IMR-90 (cell line): ENCODE measurements at regions of chr5 and their contacts with region 1.

Region 1: GRCh38 chr5:135560858-135561257 is 17.9 kb downstream of the CXCL14 start:
- DNase-seq: peak; percentile 70
- ATAC-seq: peak; percentile 99
- H3K4me3 ChIP-seq: no peak overlapping the region
- H3K27ac ChIP-seq: no peak overlapping the region
- H3K4me1 ChIP-seq: no peaks in the 10 kb centered on the region
- H3K27me3 ChIP-seq: peaks cover 26% of the 10 kb centered on the region
- CTCF ChIP-seq: peak; percentile 80
- POLR2A ChIP-seq: no peak
- RAD21 ChIP-seq: peak; percentile 72

Region 2: DNA sequence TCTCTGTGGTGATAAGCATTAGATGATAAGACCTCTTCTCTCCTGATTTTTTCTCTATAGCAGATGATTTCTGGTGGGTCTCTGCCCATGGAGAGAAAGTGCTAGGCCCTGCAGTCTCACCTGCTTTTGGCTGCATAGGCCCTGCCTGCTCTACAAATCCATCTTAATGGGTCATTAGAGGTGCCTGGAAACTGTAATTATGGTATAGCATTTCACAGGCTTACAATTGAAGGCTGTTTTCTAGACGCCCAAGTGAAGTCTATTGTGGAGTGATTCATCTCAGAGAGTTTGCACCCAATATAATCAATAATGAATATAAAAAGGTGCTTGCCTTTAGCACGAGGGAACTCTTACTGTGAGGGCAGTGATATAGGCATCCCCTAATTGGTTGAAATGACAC is 58.9 kb before region 1 on chr5:
- CTCF ChIA-PET with region 1: no interaction called
- POLR2A ChIA-PET with region 1: no interaction called
- dilution Hi-C with region 1: no loop called
- in situ Hi-C with region 1: no loop called
- intact Hi-C with region 1: no loop called
- DNase-seq: no peak
- ATAC-seq: no peak
- H3K4me3 ChIP-seq: no peak overlapping the region
- H3K27ac ChIP-seq: no peak overlapping the region
- H3K4me1 ChIP-seq: no peaks in the 10 kb centered on the region
- H3K27me3 ChIP-seq: peaks cover 54% of the 10 kb centered on the region
- CTCF ChIP-seq: no peak
- POLR2A ChIP-seq: no peak
- RAD21 ChIP-seq: no peak

Region 3: DNA sequence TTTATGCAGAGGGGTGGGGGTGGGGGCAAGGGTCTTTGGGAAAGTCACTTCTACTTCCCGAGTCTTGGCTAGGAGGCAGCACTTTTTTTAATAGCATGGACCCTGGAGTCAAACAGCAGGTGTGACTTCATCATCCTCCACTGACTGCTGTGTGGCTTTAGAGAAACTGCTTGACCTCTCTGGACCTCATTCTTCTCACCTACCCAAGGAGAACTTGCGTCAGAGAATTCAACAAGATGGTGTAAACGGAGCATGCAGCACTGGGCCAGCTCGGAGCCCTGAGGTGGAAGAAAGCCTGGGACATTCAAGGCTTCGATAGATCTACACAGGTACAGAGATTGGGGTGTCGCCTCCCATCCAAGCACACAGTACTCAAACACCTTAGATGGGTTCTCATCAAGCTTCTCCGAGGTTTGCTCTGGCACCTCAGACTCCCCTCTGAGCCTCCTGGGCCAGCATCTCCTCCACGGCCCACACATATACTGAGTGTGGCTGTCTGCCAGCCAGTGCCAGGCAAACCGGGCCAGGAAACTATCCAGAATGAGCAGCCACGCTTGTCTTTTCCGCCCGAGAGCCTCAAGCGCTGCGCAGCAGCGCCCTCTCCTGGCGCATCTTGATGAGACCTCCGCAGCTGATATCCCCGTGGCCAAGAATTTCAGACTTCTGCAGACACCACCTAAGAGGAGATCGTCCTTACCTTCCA is 269.0 kb after region 1 on chr5:
- CTCF ChIA-PET with region 1: interaction called, 11 read pairs
- POLR2A ChIA-PET with region 1: no interaction called
- dilution Hi-C with region 1: no loop called
- in situ Hi-C with region 1: loop called (anchors 10 kb)
- intact Hi-C with region 1: loop called (anchors 1 kb)
- DNase-seq: peak; percentile 31
- ATAC-seq: peak; percentile 73
- H3K4me3 ChIP-seq: no peak overlapping the region
- H3K27ac ChIP-seq: no peak overlapping the region
- H3K4me1 ChIP-seq: no peaks in the 10 kb centered on the region
- H3K27me3 ChIP-seq: peaks cover 36% of the 10 kb centered on the region; the same call in 1 of the 2 replicates
- CTCF ChIP-seq: peak; percentile 74
- POLR2A ChIP-seq: no peak
- RAD21 ChIP-seq: peak; percentile 69

Region 4: GRCh38 chr5:136212252-136212721 is 651.4 kb after region 1 on chr5:
- CTCF ChIA-PET with region 1: no interaction called
- POLR2A ChIA-PET with region 1: no interaction called
- dilution Hi-C with region 1: no loop called
- in situ Hi-C with region 1: loop called (anchors 25 kb)
- intact Hi-C with region 1: loop called (anchors 10 kb)
- DNase-seq: peak; percentile 48
- ATAC-seq: peak; percentile 74
- H3K4me3 ChIP-seq: no peak overlapping the region
- H3K27ac ChIP-seq: no peak overlapping the region
- H3K4me1 ChIP-seq: no peaks in the 10 kb centered on the region
- H3K27me3 ChIP-seq: peaks cover 32% of the 10 kb centered on the region
- CTCF ChIP-seq: peak; percentile 76
- POLR2A ChIP-seq: no peak
- RAD21 ChIP-seq: peak; percentile 76